ENCODE measurements at regions of chr15 and their contacts with region 1.

Region 1: DNA sequence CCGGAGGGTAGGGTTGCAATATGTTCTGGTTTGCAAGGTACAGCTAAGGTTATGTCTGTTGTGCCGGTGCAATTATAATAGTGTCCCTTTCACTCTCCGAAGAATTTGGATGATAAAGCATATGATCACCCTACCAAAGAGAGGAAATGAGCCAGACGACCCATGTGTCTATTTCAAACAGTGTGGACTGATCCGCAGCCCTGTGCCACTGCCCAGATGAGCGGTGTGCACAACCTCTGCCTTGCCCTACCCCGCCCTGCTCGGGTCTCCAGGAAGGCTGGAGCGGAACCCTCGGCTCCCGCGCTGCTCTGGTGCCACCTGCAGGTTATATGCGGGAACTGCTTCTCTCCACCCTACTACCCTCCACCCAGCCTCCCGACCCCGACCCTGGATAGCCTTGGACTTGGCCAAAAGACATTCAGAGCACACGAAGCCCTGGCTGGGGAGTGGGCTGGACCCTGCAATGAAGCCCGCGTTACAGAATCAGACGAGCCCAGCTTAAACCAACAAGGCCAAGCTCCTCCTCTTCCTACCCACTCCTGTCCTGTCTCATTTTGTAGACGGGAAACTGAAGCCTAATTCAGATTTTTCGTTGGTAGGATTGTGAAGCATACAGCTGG is 68.4 kb upstream of the CHRNB4 start:
- DNase-seq: peak; percentile 42
- H3K4me3 ChIP-seq: no peak overlapping the region
- H3K27ac ChIP-seq: no peak overlapping the region
- H3K4me1 ChIP-seq: no peaks in the 10 kb centered on the region
- H3K27me3 ChIP-seq: peaks cover 12 to 23% of the 10 kb centered on the region in 2 experiments
- CTCF ChIP-seq: peak; percentile 68 to 90
- POLR2A ChIP-seq: no peak

Region 2: GRCh38 chr15:78618490-78618934 is 90.9 kb before region 1 on chr15:
- CTCF ChIA-PET with region 1: interaction called, 19 read pairs
- POLR2A ChIA-PET with region 1: no interaction called
- dilution Hi-C with region 1: no loop called
- intact Hi-C with region 1: loop called (anchors 1 kb)
- DNase-seq: peak; percentile 73
- H3K4me3 ChIP-seq: no peak overlapping the region
- H3K27ac ChIP-seq: no peak overlapping the region
- H3K4me1 ChIP-seq: no peaks in the 10 kb centered on the region
- H3K27me3 ChIP-seq: peaks cover 30 to 49% of the 10 kb centered on the region in 2 experiments
- CTCF ChIP-seq: peak; percentile 73 to 76
- POLR2A ChIP-seq: no peak

Region 3: GRCh38 chr15:78726870-78727551 is 17.6 kb after region 1 on chr15:
- CTCF ChIA-PET with region 1: no interaction called
- POLR2A ChIA-PET with region 1: no interaction called
- dilution Hi-C with region 1: no loop called
- intact Hi-C with region 1: no loop called
- DNase-seq: no peak
- H3K4me3 ChIP-seq: no peak overlapping the region
- H3K27ac ChIP-seq: no peak overlapping the region
- H3K4me1 ChIP-seq: no peaks in the 10 kb centered on the region
- H3K27me3 ChIP-seq: no peaks in the 10 kb centered on the region
- CTCF ChIP-seq: no peak
- POLR2A ChIP-seq: no peak

Region 4: GRCh38 chr15:79035111-79035601 is 325.8 kb after region 1 on chr15:
- CTCF ChIA-PET with region 1: no interaction called
- POLR2A ChIA-PET with region 1: no interaction called
- dilution Hi-C with region 1: no loop called
- intact Hi-C with region 1: no loop called
- DNase-seq: no peak
- H3K4me3 ChIP-seq: no peak overlapping the region
- H3K27ac ChIP-seq: no peak overlapping the region
- H3K4me1 ChIP-seq: no peaks in the 10 kb centered on the region
- H3K27me3 ChIP-seq: peaks cover 7% of the 10 kb centered on the region in 2 experiments
- CTCF ChIP-seq: no peak
- POLR2A ChIP-seq: no peak

Measured in endothelial cell of umbilical vein (primary cell).